ENCODE measurements at regions of chr7 and their contacts with region 1.

Region 1: GRCh38 chr7:47179812-47180515 is 401.9 kb downstream of the TNS3 start:
- DNase-seq: no peak
- H3K4me3 ChIP-seq: no peak overlapping the region
- H3K27ac ChIP-seq: no peak overlapping the region
- H3K4me1 ChIP-seq: peaks cover 7 to 28% of the 10 kb centered on the region in 2 donors
- H3K27me3 ChIP-seq: no peaks in the 10 kb centered on the region
- CTCF ChIP-seq: peak; percentile 62 to 85 (median 81)

Region 2: DNA sequence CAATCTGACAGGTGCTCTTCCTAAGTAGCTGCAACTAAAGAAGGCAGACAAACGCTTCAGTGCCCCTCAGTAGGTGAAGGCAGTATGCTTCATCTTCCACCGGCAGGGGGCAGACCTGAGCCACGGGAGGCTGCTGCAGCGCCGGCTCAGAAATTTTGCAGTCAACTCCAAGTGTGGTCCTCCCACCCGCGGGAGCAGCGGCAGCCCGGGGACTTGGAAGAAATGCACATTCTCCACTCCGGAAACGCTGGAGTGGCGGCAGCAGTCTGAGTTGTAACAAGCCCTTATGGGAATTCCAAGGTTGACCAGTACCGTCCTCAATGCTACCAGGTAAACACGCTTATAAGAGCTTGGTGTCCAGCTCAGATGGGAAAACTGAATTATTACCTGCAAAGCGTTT is 1262.3 kb before region 1 on chr7:
- intact Hi-C with region 1: loop called (anchors 1 kb)
- DNase-seq: peak in 1 of 2 donors; percentile 88
- H3K4me3 ChIP-seq: peak overlapping the region in 1 of 2 donors; percentile 85
- H3K27ac ChIP-seq: no peak overlapping the region
- H3K4me1 ChIP-seq: peaks cover 0 to 29% of the 10 kb centered on the region in 2 donors
- H3K27me3 ChIP-seq: no peaks in the 10 kb centered on the region
- CTCF ChIP-seq: peak; percentile 76 to 95 (median 95)

Region 3: GRCh38 chr7:47351233-47352154 is 171.5 kb after region 1 on chr7:
- intact Hi-C with region 1: no loop called
- DNase-seq: no peak
- H3K4me3 ChIP-seq: no peak overlapping the region
- H3K27ac ChIP-seq: no peak overlapping the region
- H3K4me1 ChIP-seq: no peaks in the 10 kb centered on the region
- H3K27me3 ChIP-seq: no peaks in the 10 kb centered on the region
- CTCF ChIP-seq: no peak

Measured in ascending aorta (tissue), 2 donors.